Heart right ventricle (tissue), 16 donors: ENCODE measurements at regions of chr7 and their contacts with region 1.

Region 1: GRCh38 chr7:29408841-29409243 is 154.8 kb upstream of the PRR15 start:
- DNase-seq: peak in 1 of 2 donors; percentile 65
- ATAC-seq: peak in 7 of 8 donors; percentile 38 to 79 (median 57)
- H3K4me3 ChIP-seq: no peak overlapping the region
- H3K27ac ChIP-seq: no peak overlapping the region
- H3K4me1 ChIP-seq: peaks cover 0 to 9% (median 0%) of the 10 kb centered on the region in 9 donors
- H3K27me3 ChIP-seq: no peaks in the 10 kb centered on the region
- CTCF ChIP-seq: peak; percentile 73 to 91 (median 84)

Region 2: GRCh38 chr7:28800150-28800549 is 608.7 kb before region 1 on chr7:
- intact Hi-C with region 1: no loop called
- DNase-seq: peak in 1 of 2 donors; percentile 15
- ATAC-seq: peak in 7 of 8 donors; percentile 41 to 76 (median 58)
- H3K4me3 ChIP-seq: no peak overlapping the region
- H3K27ac ChIP-seq: peak overlapping the region in 1 of 10 donors; percentile 59
- H3K4me1 ChIP-seq: peaks cover 0 to 8% (median 0%) of the 10 kb centered on the region in 9 donors
- H3K27me3 ChIP-seq: no peaks in the 10 kb centered on the region
- CTCF ChIP-seq: no peak

Region 3: GRCh38 chr7:28926871-28927597 is 481.8 kb before region 1 on chr7:
- intact Hi-C with region 1: loop called in 8 of 10 experiments (anchors 2 to 5 kb)
- DNase-seq: peak; percentile 66 to 86
- ATAC-seq: peak; percentile 82 to 96 (median 94)
- H3K4me3 ChIP-seq: peak overlapping the region; percentile 24 to 65 (median 52)
- H3K27ac ChIP-seq: peak overlapping the region in 9 of 10 donors; percentile 11 to 69 (median 45)
- H3K4me1 ChIP-seq: peaks cover 0 to 24% (median 18%) of the 10 kb centered on the region in 9 donors
- H3K27me3 ChIP-seq: peaks cover 0 to 6% (median 0%) of the 10 kb centered on the region in 7 donors
- CTCF ChIP-seq: peak; percentile 73 to 91 (median 84)

Region 4: GRCh38 chr7:29113384-29114103 is 295.3 kb before region 1 on chr7:
- intact Hi-C with region 1: loop called in 9 of 10 experiments (anchors 5 to 10 kb)
- DNase-seq: no peak
- ATAC-seq: peak in 4 of 8 donors; percentile 24 to 59 (median 34)
- H3K4me3 ChIP-seq: no peak overlapping the region
- H3K27ac ChIP-seq: no peak overlapping the region
- H3K4me1 ChIP-seq: peaks cover 0 to 57% (median 15%) of the 10 kb centered on the region in 9 donors
- H3K27me3 ChIP-seq: peaks cover 0 to 3% (median 0%) of the 10 kb centered on the region in 7 donors
- CTCF ChIP-seq: peak in 7 of 9 donors; percentile 7 to 49 (median 37)

Region 5: GRCh38 chr7:29189743-29190201 is 219.1 kb before region 1 on chr7:
- intact Hi-C with region 1: loop called in 9 of 10 experiments (anchors 1 to 5 kb)
- DNase-seq: peak; percentile 55 to 59
- ATAC-seq: peak in 7 of 8 donors; percentile 38 to 84 (median 66)
- H3K4me3 ChIP-seq: no peak overlapping the region
- H3K27ac ChIP-seq: no peak overlapping the region
- H3K4me1 ChIP-seq: peaks cover 0 to 24% (median 4%) of the 10 kb centered on the region in 9 donors
- H3K27me3 ChIP-seq: peaks cover 0 to 29% (median 4%) of the 10 kb centered on the region in 7 donors
- CTCF ChIP-seq: peak; percentile 68 to 84 (median 80)

Region 6: DNA sequence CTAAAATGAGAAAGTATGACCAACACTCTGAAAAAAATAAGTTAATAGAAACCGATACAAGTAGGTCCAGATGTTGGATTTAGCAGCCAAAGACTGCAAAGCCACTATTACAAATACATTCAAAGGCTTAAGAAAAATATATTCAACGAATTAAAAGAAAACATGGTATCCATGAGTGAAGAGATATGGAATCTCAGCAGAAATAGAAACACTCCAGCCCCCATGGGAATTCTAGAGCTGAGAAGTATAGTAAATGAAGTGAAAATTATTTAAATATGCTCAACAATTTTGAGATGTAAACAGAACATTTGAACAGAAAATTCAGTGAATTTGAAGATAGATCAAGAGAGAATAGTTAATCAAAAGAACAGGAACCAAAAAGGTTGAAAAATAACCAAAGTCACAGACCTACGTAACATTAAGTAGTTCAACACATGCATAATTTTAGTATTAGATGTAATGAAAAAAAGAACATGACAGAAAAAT is 325.4 kb after region 1 on chr7:
- intact Hi-C with region 1: no loop called
- DNase-seq: no peak
- ATAC-seq: no peak
- H3K4me3 ChIP-seq: no peak overlapping the region
- H3K27ac ChIP-seq: no peak overlapping the region
- H3K4me1 ChIP-seq: no peaks in the 10 kb centered on the region
- H3K27me3 ChIP-seq: no peaks in the 10 kb centered on the region
- CTCF ChIP-seq: no peak